Sigmoid colon (tissue), 7 donors: ENCODE measurements at regions of chr11 and their contacts with region 1.

Region 1: DNA sequence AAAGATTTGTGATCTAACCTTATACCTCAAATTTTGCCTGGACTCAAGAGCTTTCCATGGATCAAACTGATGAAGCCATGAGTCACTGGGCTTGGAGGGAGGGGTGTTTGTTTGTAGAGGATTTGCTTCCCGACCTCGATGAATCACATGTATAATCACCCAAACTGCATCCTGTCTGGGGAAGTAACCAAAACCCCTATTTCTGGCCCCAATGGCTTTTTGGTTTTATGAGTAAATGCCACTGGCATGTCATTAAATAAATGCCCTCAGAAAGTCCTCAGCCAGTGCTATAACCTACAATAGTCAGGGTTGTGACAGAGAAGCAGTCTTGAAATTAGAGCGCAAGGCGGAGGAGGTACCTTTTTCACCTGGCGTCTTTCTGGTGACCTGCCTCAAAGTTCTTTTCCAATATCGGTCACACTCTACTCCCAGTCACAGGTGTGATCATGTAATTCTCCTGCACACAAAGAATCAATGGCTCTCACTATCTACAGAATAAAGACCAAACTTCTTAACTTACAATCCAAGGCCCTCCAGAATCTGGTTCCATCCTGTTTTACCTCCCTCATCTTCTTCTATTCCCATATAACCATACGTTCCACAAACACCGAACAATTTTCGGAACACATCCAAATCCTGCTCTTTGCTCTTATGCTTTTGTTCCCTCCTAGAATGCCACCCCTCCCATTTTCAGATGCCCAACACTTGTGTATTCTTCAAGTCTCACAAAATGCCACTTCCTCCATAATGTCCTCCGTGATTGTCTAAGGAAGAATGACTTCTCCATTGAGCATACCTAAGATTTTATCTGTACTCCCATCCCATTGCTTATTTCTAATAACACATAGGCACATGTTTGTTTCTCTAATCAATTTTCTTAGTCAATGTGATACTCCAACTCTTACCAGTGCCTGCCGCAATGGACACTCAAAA is 81.3 kb upstream of the BLID start:
- DNase-seq: no peak
- H3K4me3 ChIP-seq: no peak overlapping the region
- H3K27ac ChIP-seq: peak overlapping the region in 3 of 4 donors; percentile 47 to 55 (median 47)
- H3K4me1 ChIP-seq: peaks cover 0 to 41% (median 13%) of the 10 kb centered on the region in 4 donors
- H3K27me3 ChIP-seq: no peaks in the 10 kb centered on the region
- CTCF ChIP-seq: no peak
- EP300 ChIP-seq: no peak
- POLR2A ChIP-seq: no peak

Region 2: DNA sequence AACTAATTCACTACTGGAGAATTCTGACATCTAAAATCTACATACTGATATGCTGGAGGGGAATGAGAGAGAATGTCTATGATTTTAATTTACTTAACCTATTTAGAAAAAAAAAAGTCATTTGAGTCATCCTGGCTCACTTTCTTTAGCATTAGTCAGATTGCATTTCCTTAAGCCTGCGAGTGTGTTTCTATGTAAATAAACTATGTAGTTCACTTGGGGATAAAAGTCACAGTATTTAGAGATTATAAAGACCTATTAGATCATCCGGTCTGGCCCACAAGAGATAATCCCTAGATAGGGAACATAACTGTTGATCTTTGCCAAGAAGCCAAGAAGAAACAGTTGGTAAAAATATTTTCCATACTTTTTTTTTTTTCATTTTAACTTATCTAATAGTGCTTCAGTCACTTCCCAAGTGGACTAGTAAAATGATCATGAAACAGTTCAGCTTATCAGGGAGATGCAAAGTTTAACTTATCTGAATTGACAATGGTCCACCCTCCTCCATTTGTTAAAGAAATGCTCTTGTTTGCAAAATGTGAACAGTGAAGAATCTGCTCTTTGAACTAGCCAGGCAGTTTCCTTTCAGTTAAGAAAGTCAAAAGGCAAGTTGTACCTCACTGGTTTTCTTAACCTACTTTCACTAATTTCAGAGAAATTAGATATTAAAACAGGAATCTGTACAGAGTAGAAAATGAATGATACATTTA is 60.1 kb before region 1 on chr11:
- intact Hi-C with region 1: no loop called
- DNase-seq: no peak
- H3K4me3 ChIP-seq: no peak overlapping the region
- H3K27ac ChIP-seq: peak overlapping the region in 2 of 4 donors; percentile 36 to 50
- H3K4me1 ChIP-seq: peaks cover 0 to 10% (median 5%) of the 10 kb centered on the region in 4 donors
- H3K27me3 ChIP-seq: no peaks in the 10 kb centered on the region
- CTCF ChIP-seq: no peak
- EP300 ChIP-seq: no peak
- POLR2A ChIP-seq: no peak

Region 3: GRCh38 chr11:122229481-122230384 is 32.4 kb after region 1 on chr11:
- intact Hi-C with region 1: loop called (anchors 1 kb)
- DNase-seq: no peak
- H3K4me3 ChIP-seq: no peak overlapping the region
- H3K27ac ChIP-seq: no peak overlapping the region
- H3K4me1 ChIP-seq: peaks cover 0 to 9% (median under 1%) of the 10 kb centered on the region in 4 donors
- H3K27me3 ChIP-seq: no peaks in the 10 kb centered on the region
- CTCF ChIP-seq: no peak
- EP300 ChIP-seq: no peak
- POLR2A ChIP-seq: no peak